Naive thymus-derived CD4-positive, alpha-beta T cell (primary cell): ENCODE measurements at regions of chr6 and their contacts with region 1.

Region 1: GRCh38 chr6:44983467-44984365 is 344.4 kb upstream of the RUNX2 start:
- DNase-seq: no peak
- ATAC-seq: no peak
- H3K4me3 ChIP-seq: no peak overlapping the region
- H3K4me3 Mint-ChIP-seq: peak overlapping the region in 1 of 10 donors; percentile 49
- H3K27ac ChIP-seq: no peak overlapping the region
- H3K27ac Mint-ChIP-seq: no peak overlapping the region
- H3K4me1 ChIP-seq: no peaks in the 10 kb centered on the region
- H3K4me1 Mint-ChIP-seq: peaks cover 9 to 66% (median 28%) of the 10 kb centered on the region in 7 donors
- H3K27me3 ChIP-seq: no peaks in the 10 kb centered on the region
- H3K27me3 Mint-ChIP-seq: no peaks in the 10 kb centered on the region

Region 2: GRCh38 chr6:44995486-44996132 is 11.9 kb after region 1 on chr6:
- CTCF ChIA-PET with region 1: no interaction called
- POLR2A ChIA-PET with region 1: no interaction called
- intact Hi-C with region 1: loop called in 1 of 2 experiments (anchors 1 kb)
- DNase-seq: no peak
- ATAC-seq: no peak
- H3K4me3 ChIP-seq: no peak overlapping the region
- H3K4me3 Mint-ChIP-seq: no peak overlapping the region
- H3K27ac ChIP-seq: no peak overlapping the region
- H3K27ac Mint-ChIP-seq: no peak overlapping the region
- H3K4me1 ChIP-seq: no peaks in the 10 kb centered on the region
- H3K4me1 Mint-ChIP-seq: peaks cover 0 to 15% (median 3%) of the 10 kb centered on the region in 7 donors
- H3K27me3 ChIP-seq: no peaks in the 10 kb centered on the region
- H3K27me3 Mint-ChIP-seq: no peaks in the 10 kb centered on the region

Region 3: GRCh38 chr6:45916692-45917091 is 933.0 kb after region 1 on chr6:
- CTCF ChIA-PET with region 1: no interaction called
- POLR2A ChIA-PET with region 1: no interaction called
- intact Hi-C with region 1: no loop called
- DNase-seq: no peak
- ATAC-seq: no peak
- H3K4me3 ChIP-seq: no peak overlapping the region
- H3K4me3 Mint-ChIP-seq: no peak overlapping the region
- H3K27ac ChIP-seq: no peak overlapping the region
- H3K27ac Mint-ChIP-seq: no peak overlapping the region
- H3K4me1 ChIP-seq: no peaks in the 10 kb centered on the region
- H3K4me1 Mint-ChIP-seq: peaks cover 0 to 13% (median 0%) of the 10 kb centered on the region in 7 donors
- H3K27me3 ChIP-seq: no peaks in the 10 kb centered on the region
- H3K27me3 Mint-ChIP-seq: no peaks in the 10 kb centered on the region